ENCODE measurements at regions of chr1 and their contacts with region 1.

Region 1: DNA sequence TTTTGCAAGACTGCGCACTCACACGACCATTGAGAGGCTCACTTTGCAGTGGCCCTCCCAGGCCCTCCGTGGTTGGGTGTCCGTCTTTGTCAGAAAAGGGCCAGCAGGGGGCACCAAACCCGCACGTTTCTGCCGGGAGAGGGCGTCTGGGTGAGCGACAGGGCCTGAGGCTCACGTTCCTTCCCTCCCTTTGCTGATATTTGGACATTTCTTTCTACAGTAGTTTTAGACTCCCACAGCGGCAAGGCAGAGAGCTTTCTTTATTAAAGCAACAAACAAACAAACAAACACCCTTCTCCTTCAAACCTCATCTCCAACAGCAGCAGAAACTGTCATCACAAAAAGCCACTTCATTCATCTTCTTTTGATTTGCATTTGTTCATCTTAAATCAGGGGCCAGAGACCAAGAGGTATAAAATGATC is 79.2 kb upstream of the WDR26 start:
- ATAC-seq: peak; percentile 88 to 99 (median 99)
- H3K4me3 ChIP-seq: no peak overlapping the region
- H3K27ac ChIP-seq: no peak overlapping the region
- H3K4me1 ChIP-seq: no peaks in the 10 kb centered on the region

Region 2: GRCh38 chr1:224644553-224645154 is 130.9 kb after region 1 on chr1:
- in situ Hi-C with region 1: loop called in 1 of 9 experiments (anchors 10 kb)
- ATAC-seq: peak; percentile 59 to 85 (median 65)
- H3K4me3 ChIP-seq: no peak overlapping the region
- H3K27ac ChIP-seq: no peak overlapping the region
- H3K4me1 ChIP-seq: peaks cover 0 to 13% of the 10 kb centered on the region in 2 donors

Region 3: GRCh38 chr1:224851210-224851847 is 337.5 kb after region 1 on chr1:
- in situ Hi-C with region 1: loop called in 4 of 9 experiments (anchors 10 to 25 kb)
- ATAC-seq: peak; percentile 37 to 82 (median 58)
- H3K4me3 ChIP-seq: no peak overlapping the region
- H3K27ac ChIP-seq: no peak overlapping the region
- H3K4me1 ChIP-seq: peaks cover 2 to 3% of the 10 kb centered on the region in 2 donors

Region 4: GRCh38 chr1:224922404-224923164 is 408.8 kb after region 1 on chr1:
- in situ Hi-C with region 1: loop called in 4 of 9 experiments (anchors 5 to 25 kb)
- ATAC-seq: peak; percentile 72 to 95 (median 90)
- H3K4me3 ChIP-seq: no peak overlapping the region
- H3K27ac ChIP-seq: no peak overlapping the region
- H3K4me1 ChIP-seq: no peaks in the 10 kb centered on the region